ENCODE measurements at regions of chr4 and their contacts with region 1.

Region 1: GRCh38 chr4:674172-675035 is at the starts of genes ATP5ME and MYL5:
- DNase-seq: peak; percentile 98
- ATAC-seq: peak; percentile 95
- H3K4me3 Mint-ChIP-seq: peak within 1 kb of the TSS; percentile 80
- H3K27ac Mint-ChIP-seq: peak within 1 kb of the TSS; percentile 84
- H3K4me1 Mint-ChIP-seq: peaks cover 13% of the 10 kb centered on the region
- H3K27me3 Mint-ChIP-seq: no peaks in the 10 kb centered on the region
- total RNA-seq, gene ATP5ME: 147 to 210 TPM
- total RNA-seq, gene MYL5: 13.7 to 16.4 TPM

Region 2: GRCh38 chr4:124275-125081 is 549.9 kb before region 1 on chr4 and contains the start of gene ZNF718:
- CTCF ChIA-PET with region 1: no interaction called
- POLR2A ChIA-PET with region 1: no interaction called
- intact Hi-C with region 1: loop called in 1 of 2 experiments (anchors 5 kb)
- DNase-seq: peak; percentile 97
- ATAC-seq: peak; percentile 98
- H3K4me3 Mint-ChIP-seq: peak within 1 kb of the TSS; percentile 91
- H3K27ac Mint-ChIP-seq: peak within 1 kb of the TSS; percentile 100
- H3K4me1 Mint-ChIP-seq: peaks cover 44% of the 10 kb centered on the region
- H3K27me3 Mint-ChIP-seq: no peaks in the 10 kb centered on the region
- total RNA-seq, gene ZNF718: 9.7 to 10.3 TPM

Region 3: GRCh38 chr4:337143-337931 is 337.1 kb before region 1 on chr4 and contains the start of gene ZNF141:
- CTCF ChIA-PET with region 1: no interaction called
- POLR2A ChIA-PET with region 1: no interaction called
- intact Hi-C with region 1: loop called in 1 of 2 experiments (anchors 1 kb)
- DNase-seq: peak; percentile 95
- ATAC-seq: peak; percentile 96
- H3K4me3 Mint-ChIP-seq: peak within 1 kb of the TSS; percentile 99
- H3K27ac Mint-ChIP-seq: peak within 1 kb of the TSS; percentile 100
- H3K4me1 Mint-ChIP-seq: peaks cover 24% of the 10 kb centered on the region
- H3K27me3 Mint-ChIP-seq: no peaks in the 10 kb centered on the region
- total RNA-seq, gene ZNF141: 26.5 to 35.3 TPM

Region 4: DNA sequence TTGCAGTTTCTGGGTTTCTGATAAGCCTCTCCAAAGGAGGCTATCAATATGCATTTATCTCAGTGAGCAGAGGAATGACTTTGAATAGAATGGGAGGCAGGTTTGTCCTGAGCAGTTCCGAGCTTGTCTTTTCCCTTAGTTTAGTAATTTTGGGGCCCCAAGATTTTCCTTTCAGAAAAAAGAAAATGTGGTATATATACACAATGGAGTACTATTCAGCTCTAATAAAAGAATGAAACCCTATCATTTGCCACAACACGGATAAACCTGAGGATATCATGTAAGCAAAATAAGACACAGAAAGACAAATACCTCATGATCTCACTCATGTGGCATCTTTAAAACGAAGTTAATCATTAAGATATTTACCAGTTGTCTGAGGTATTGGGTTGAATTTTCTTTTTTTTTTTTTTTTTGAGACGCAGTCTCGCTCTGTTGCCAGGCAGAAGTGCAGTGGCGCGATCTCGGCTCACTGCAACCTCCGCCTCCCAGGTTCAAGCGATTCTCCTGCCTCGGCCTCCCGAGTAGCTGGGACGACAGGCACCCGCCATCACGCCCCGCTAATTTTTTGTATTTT is 176.0 kb before region 1 on chr4:
- CTCF ChIA-PET with region 1: no interaction called
- POLR2A ChIA-PET with region 1: no interaction called
- intact Hi-C with region 1: loop called (anchors 1 to 10 kb)
- DNase-seq: no peak
- ATAC-seq: peak; percentile 23
- H3K4me3 Mint-ChIP-seq: peak overlapping the region; percentile 94
- H3K27ac Mint-ChIP-seq: peak overlapping the region; percentile 97
- H3K4me1 Mint-ChIP-seq: peaks cover 33% of the 10 kb centered on the region
- H3K27me3 Mint-ChIP-seq: no peaks in the 10 kb centered on the region

Region 5: GRCh38 chr4:587671-588350 is 86.6 kb before region 1 on chr4:
- CTCF ChIA-PET with region 1: no interaction called
- POLR2A ChIA-PET with region 1: no interaction called
- intact Hi-C with region 1: no loop called
- DNase-seq: no peak
- ATAC-seq: no peak
- H3K4me3 Mint-ChIP-seq: no peak overlapping the region
- H3K27ac Mint-ChIP-seq: no peak overlapping the region
- H3K4me1 Mint-ChIP-seq: no peaks in the 10 kb centered on the region
- H3K27me3 Mint-ChIP-seq: peaks cover 22% of the 10 kb centered on the region

Region 6: DNA sequence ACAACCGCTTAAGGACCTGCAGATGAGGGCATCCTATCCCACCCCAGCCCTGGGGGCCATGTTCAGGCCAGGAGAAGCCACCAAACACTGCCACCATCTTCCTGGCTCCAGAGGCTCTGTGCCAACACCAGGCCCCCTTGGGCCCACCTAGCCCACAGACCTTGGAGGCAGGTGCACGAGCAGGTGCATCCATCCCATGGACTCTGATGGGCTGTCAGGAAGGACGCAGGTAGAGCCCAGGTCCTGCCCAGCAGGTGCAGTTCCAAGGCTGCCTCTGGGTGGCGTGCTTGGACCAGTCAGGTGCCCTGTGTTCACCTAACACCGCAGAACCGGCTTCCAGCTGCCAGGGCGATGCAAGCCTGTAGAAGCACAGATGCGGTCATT is 71.9 kb before region 1 on chr4:
- CTCF ChIA-PET with region 1: interaction called, 4 read pairs
- POLR2A ChIA-PET with region 1: interaction called, 3 read pairs
- intact Hi-C with region 1: loop called (anchors 1 to 5 kb)
- DNase-seq: peak; percentile 90
- ATAC-seq: peak; percentile 69
- H3K4me3 Mint-ChIP-seq: no peak overlapping the region
- H3K27ac Mint-ChIP-seq: no peak overlapping the region
- H3K4me1 Mint-ChIP-seq: peaks cover 19% of the 10 kb centered on the region
- H3K27me3 Mint-ChIP-seq: peaks cover 11% of the 10 kb centered on the region

Region 7: GRCh38 chr4:617644-618641 is 56.5 kb before region 1 on chr4:
- CTCF ChIA-PET with region 1: no interaction called
- POLR2A ChIA-PET with region 1: no interaction called
- intact Hi-C with region 1: no loop called
- DNase-seq: no peak
- ATAC-seq: no peak
- H3K4me3 Mint-ChIP-seq: no peak overlapping the region
- H3K27ac Mint-ChIP-seq: no peak overlapping the region
- H3K4me1 Mint-ChIP-seq: no peaks in the 10 kb centered on the region
- H3K27me3 Mint-ChIP-seq: peaks cover 10% of the 10 kb centered on the region

Region 8: GRCh38 chr4:705278-706082 is 31.1 kb after region 1 on chr4 and contains the start of gene PCGF3:
- CTCF ChIA-PET with region 1: no interaction called
- POLR2A ChIA-PET with region 1: no interaction called
- intact Hi-C with region 1: loop called (anchors 1 kb)
- DNase-seq: peak; percentile 99
- ATAC-seq: peak; percentile 99
- H3K4me3 Mint-ChIP-seq: peak within 1 kb of the TSS; percentile 68
- H3K27ac Mint-ChIP-seq: no peak within 1 kb of the TSS
- H3K4me1 Mint-ChIP-seq: peaks cover 15% of the 10 kb centered on the region
- H3K27me3 Mint-ChIP-seq: no peaks in the 10 kb centered on the region
- total RNA-seq, gene PCGF3: 20.6 to 22.5 TPM

Region 9: GRCh38 chr4:766152-766515 is 91.7 kb after region 1 on chr4:
- CTCF ChIA-PET with region 1: no interaction called
- POLR2A ChIA-PET with region 1: no interaction called
- intact Hi-C with region 1: no loop called
- DNase-seq: no peak
- ATAC-seq: no peak
- H3K4me3 Mint-ChIP-seq: no peak overlapping the region
- H3K27ac Mint-ChIP-seq: peak overlapping the region; percentile 43
- H3K4me1 Mint-ChIP-seq: peaks cover 11% of the 10 kb centered on the region
- H3K27me3 Mint-ChIP-seq: no peaks in the 10 kb centered on the region

Region 10: GRCh38 chr4:1346781-1347409 is 672.5 kb after region 1 on chr4 and contains the start of gene UVSSA:
- CTCF ChIA-PET with region 1: no interaction called
- POLR2A ChIA-PET with region 1: no interaction called
- intact Hi-C with region 1: loop called in 1 of 2 experiments (anchors 1 kb)
- DNase-seq: peak; percentile 100
- ATAC-seq: peak; percentile 95
- H3K4me3 Mint-ChIP-seq: peak within 1 kb of the TSS; percentile 86
- H3K27ac Mint-ChIP-seq: peak within 1 kb of the TSS; percentile 87
- H3K4me1 Mint-ChIP-seq: peaks cover 47% of the 10 kb centered on the region
- H3K27me3 Mint-ChIP-seq: no peaks in the 10 kb centered on the region
- total RNA-seq, gene UVSSA: 14.8 to 18.1 TPM

Measured in activated CD4-positive, alpha-beta T cell treated with anti-CD3 and anti-CD28 coated beads for 36 hours (primary cell).